Mammary epithelial cell (primary cell): ENCODE measurements at regions of chr16 and their contacts with region 1.

Region 1: DNA sequence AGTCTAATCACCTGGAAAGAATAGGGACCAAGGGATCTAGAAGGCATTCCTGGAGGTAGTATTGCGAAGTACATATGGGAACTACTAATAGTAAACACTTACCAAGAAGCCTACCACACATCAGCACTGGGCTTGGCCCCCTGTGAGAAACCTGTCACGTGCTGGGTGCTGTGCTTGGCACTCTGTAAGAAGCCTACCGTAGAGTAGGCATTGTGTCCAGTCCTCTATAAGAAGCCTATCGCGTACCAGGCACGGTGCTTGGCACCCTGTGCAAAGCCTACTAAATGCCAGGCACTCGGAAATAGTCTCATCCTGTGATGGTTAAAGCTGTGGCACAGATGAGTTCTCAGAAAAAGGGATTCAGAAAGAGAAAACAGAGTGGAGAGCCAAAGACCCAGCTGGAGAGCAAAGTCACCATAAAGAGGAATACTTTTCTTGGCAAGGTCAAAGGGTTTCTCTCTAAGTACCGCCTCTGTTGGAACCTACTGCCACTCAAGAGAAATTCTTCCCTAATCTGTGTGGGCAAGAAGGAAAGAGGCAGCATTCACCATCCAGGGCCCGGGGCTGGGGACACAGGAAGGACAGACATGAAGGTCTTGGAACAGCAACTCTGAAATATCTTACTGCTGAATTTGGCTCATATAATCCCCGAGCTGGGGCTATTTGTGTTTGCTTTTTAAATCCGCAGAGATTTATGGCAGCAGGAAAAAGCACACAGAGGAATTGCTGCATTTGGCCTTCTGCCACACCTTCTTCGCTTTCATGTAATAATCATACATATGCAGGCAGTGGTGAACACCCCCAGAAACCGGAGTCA is 81.8 kb downstream of the VAT1L start:
- DNase-seq: no peak
- H3K4me3 ChIP-seq: no peak overlapping the region
- H3K27ac ChIP-seq: no peak overlapping the region
- H3K4me1 ChIP-seq: no peaks in the 10 kb centered on the region
- H3K27me3 ChIP-seq: no peaks in the 10 kb centered on the region
- CTCF ChIP-seq: no peak

Region 2: GRCh38 chr16:77919761-77920415 is 49.7 kb after region 1 on chr16:
- CTCF ChIA-PET with region 1: no interaction called
- dilution Hi-C with region 1: loop called (anchors 5 kb)
- in situ Hi-C with region 1: no loop called
- intact Hi-C with region 1: no loop called
- DNase-seq: no peak
- H3K4me3 ChIP-seq: no peak overlapping the region
- H3K27ac ChIP-seq: no peak overlapping the region
- H3K4me1 ChIP-seq: no peaks in the 10 kb centered on the region
- H3K27me3 ChIP-seq: no peaks in the 10 kb centered on the region
- CTCF ChIP-seq: no peak